ENCODE measurements at regions of chr4 and their contacts with region 1.

Region 1: DNA sequence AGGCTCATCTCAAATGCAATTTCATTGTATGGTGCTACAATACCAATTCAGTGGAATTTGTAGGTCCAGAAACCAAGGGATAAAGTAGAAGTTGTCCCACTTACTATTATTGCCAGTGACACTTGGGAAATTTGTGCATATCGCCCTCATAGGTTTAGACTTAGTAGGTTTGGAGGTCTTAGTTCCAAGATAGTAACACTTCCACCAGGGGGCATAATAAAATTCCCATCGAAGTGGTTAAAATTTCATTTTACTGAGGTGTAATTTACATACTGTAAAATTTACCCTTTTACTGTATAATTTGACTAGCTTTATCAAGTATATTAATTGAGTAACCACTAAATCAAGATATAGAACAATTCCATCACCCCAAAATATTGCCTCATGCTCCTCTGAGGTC is 174.6 kb downstream of the INPP4B start:
- DNase-seq: no peak
- H3K4me3 ChIP-seq: no peak overlapping the region
- H3K4me3 Mint-ChIP-seq: no peak overlapping the region
- H3K27ac ChIP-seq: no peak overlapping the region
- H3K27ac Mint-ChIP-seq: peak overlapping the region in 1 of 7 donors; percentile 55
- H3K4me1 ChIP-seq: no peaks in the 10 kb centered on the region
- H3K4me1 Mint-ChIP-seq: peaks cover 0 to 8% (median 5%) of the 10 kb centered on the region in 4 donors
- H3K27me3 ChIP-seq: no peaks in the 10 kb centered on the region
- H3K27me3 Mint-ChIP-seq: no peaks in the 10 kb centered on the region

Region 2: DNA sequence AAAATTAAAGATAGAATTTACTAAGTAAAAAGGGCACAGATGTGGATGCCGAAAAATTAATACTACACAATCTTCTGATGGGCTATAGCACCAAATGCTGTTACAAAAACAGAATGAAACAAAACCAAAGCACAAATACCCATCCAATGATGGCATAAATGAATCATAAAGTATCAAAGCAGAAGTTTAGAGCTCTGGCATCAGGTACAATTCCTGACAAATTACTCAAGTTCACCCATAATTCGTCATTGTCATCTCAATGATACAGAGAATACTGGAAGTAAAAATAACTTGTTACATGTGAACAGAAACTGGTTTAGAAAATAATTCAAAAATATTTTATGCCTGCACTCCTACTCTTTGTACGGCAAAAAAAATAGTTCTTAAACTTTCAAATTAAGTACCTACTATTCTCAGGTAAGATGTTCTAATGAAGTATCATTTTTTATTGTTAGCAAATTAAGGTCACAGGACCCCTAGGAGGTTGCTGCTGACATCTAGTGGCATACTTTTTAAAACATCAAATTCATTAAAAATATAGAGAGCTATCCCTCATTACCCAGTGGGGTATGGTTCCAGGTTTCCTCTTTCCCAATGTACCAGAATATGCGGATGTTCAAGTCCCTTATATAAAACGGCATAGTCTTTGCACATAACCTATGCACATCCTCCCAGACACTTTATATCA is 48.5 kb after region 1 on chr4:
- CTCF ChIA-PET with region 1: interaction called, 5 read pairs
- POLR2A ChIA-PET with region 1: no interaction called
- intact Hi-C with region 1: loop called (anchors 1 kb)
- DNase-seq: peak in 4 of 5 donors; percentile 54 to 60 (median 57)
- H3K4me3 ChIP-seq: no peak overlapping the region
- H3K4me3 Mint-ChIP-seq: peak overlapping the region in 5 of 8 donors; percentile 19 to 62 (median 49)
- H3K27ac ChIP-seq: no peak overlapping the region
- H3K27ac Mint-ChIP-seq: peak overlapping the region in 5 of 7 donors; percentile 36 to 77 (median 69)
- H3K4me1 ChIP-seq: peaks cover 14% of the 10 kb centered on the region
- H3K4me1 Mint-ChIP-seq: peaks cover 11 to 26% (median 13%) of the 10 kb centered on the region in 4 donors
- H3K27me3 ChIP-seq: no peaks in the 10 kb centered on the region
- H3K27me3 Mint-ChIP-seq: peaks cover 0 to 1% of the 10 kb centered on the region in 2 donors